OCI-LY7 (cell line): ENCODE measurements at regions of chr1 and their contacts with region 1.

Region 1: GRCh38 chr1:211335522-211336157 is 9.0 kb downstream of the TRAF5 start:
- DNase-seq: peak; percentile 84
- H3K4me3 ChIP-seq: peak overlapping the region; percentile 56
- H3K27ac ChIP-seq: peak overlapping the region; percentile 87
- H3K4me1 ChIP-seq: peaks cover 90% of the 10 kb centered on the region
- CTCF ChIP-seq: no peak

Region 2: GRCh38 chr1:210922666-210923065 is 413.0 kb before region 1 on chr1:
- CTCF ChIA-PET with region 1: no interaction called
- POLR2A ChIA-PET with region 1: no interaction called
- intact Hi-C with region 1: no loop called
- DNase-seq: no peak
- H3K4me3 ChIP-seq: no peak overlapping the region
- H3K27ac ChIP-seq: no peak overlapping the region
- H3K4me1 ChIP-seq: no peaks in the 10 kb centered on the region
- CTCF ChIP-seq: no peak

Region 3: GRCh38 chr1:211352985-211353515 is 17.4 kb after region 1 on chr1:
- CTCF ChIA-PET with region 1: interaction called, 4 read pairs
- POLR2A ChIA-PET with region 1: interaction called, 5 read pairs
- intact Hi-C with region 1: loop called (anchors 2 kb)
- DNase-seq: peak; percentile 72
- H3K4me3 ChIP-seq: no peak overlapping the region
- H3K27ac ChIP-seq: no peak overlapping the region
- H3K4me1 ChIP-seq: peaks cover 14% of the 10 kb centered on the region
- CTCF ChIP-seq: peak; percentile 93

Region 4: DNA sequence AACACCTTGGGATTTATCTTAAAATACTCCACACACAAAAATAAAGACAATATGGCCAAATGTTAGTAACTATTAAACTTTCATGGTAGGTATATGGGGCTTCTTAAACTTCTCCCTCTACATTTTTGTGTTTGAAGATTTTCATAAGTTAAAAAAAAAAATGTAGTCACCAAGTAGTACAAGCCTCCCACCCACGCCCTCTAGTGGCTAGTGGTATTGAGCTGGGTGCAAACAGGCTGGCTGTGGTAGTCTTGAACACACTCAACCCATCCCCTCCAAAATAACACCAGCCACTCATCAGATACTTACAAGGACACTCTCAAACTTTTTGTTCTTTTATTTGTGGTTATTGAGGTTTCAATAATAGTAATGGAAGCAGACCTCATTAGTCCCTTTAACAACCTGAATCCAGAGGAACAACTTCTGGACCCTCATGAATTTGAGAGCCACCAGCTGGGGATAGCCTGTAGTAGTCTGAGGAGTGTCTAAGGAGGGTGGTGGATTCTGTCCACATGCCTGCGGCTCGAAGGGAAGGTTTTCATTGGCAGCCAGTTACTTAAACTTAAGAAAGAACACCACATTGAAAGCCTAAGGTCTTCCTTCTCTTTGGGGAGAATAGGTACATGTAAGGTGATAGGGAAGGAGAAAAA is 140.7 kb after region 1 on chr1:
- CTCF ChIA-PET with region 1: no interaction called
- POLR2A ChIA-PET with region 1: no interaction called
- intact Hi-C with region 1: no loop called
- DNase-seq: peak; percentile 77
- H3K4me3 ChIP-seq: no peak overlapping the region
- H3K27ac ChIP-seq: no peak overlapping the region
- H3K4me1 ChIP-seq: no peaks in the 10 kb centered on the region
- CTCF ChIP-seq: peak; percentile 99